ENCODE measurements at regions of chr16 and their contacts with region 1.

Region 1: GRCh38 chr16:17134586-17134985 is 336.2 kb downstream of the XYLT1 start:
- DNase-seq: no peak
- ATAC-seq: no peak
- H3K4me3 ChIP-seq: no peak overlapping the region
- H3K27ac ChIP-seq: no peak overlapping the region
- H3K4me1 ChIP-seq: no peaks in the 10 kb centered on the region
- H3K27me3 ChIP-seq: no peaks in the 10 kb centered on the region
- CTCF ChIP-seq: no peak

Region 2: GRCh38 chr16:16945207-16945606 is 189.4 kb before region 1 on chr16:
- intact Hi-C with region 1: no loop called
- DNase-seq: no peak
- ATAC-seq: no peak
- H3K4me3 ChIP-seq: no peak overlapping the region
- H3K27ac ChIP-seq: no peak overlapping the region
- H3K4me1 ChIP-seq: no peaks in the 10 kb centered on the region
- H3K27me3 ChIP-seq: peaks cover 0 to 20% (median 0%) of the 10 kb centered on the region in 7 donors
- CTCF ChIP-seq: no peak

Region 3: GRCh38 chr16:17117906-17118562 is 16.6 kb before region 1 on chr16:
- intact Hi-C with region 1: loop called in 1 of 10 experiments (anchors 1 kb)
- DNase-seq: no peak
- ATAC-seq: no peak
- H3K4me3 ChIP-seq: no peak overlapping the region
- H3K27ac ChIP-seq: no peak overlapping the region
- H3K4me1 ChIP-seq: no peaks in the 10 kb centered on the region
- H3K27me3 ChIP-seq: no peaks in the 10 kb centered on the region
- CTCF ChIP-seq: no peak

Region 4: GRCh38 chr16:17155936-17156335 is 21.4 kb after region 1 on chr16:
- intact Hi-C with region 1: loop called in 1 of 10 experiments (anchors 2 kb)
- DNase-seq: no peak
- ATAC-seq: no peak
- H3K4me3 ChIP-seq: no peak overlapping the region
- H3K27ac ChIP-seq: no peak overlapping the region
- H3K4me1 ChIP-seq: peaks cover 0 to 16% (median 0%) of the 10 kb centered on the region in 9 donors
- H3K27me3 ChIP-seq: peaks cover 0 to 10% (median 0%) of the 10 kb centered on the region in 7 donors
- CTCF ChIP-seq: no peak

Region 5: DNA sequence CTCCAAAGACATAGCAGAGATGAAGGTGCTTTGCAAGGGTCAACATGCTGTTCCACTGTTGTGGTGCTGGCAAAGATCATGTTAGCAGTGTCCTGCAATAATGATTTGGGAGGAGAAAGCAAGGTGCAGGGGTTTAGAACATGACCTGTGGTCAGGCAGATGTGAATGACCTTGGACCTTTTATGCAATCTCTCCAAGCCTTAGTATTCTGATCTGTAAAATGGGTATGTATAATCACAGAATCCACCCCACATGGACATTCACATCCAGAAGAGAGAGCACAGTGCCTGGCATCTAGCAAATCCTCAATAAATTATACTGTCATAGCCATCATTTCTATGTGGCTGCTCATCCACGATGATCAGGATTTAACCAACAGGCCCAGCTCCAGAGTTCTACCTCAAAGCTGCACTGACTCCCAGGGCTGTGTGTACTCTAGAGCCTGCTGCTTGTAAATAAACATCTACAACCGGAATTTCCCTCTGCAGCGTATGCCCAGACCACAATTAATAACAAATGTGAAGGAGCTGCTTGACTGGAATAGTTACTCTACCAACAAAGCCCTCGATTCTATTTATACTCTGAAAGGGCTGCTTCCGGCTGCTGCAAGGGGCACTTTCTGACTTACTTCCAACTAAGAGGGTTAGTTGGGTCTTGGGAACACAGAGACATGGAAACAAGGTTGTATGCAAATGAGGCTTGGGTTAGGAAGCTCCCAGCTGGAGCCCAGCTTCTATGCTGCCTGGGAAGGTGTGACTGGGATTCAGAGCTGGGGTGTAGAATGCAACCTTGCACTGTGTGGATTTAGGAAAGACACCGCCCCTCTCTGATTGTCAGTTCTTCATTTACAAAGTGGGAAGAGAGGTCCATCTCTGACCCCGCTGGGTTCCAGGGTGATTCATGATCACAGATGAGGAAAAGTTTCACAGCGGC is 71.0 kb after region 1 on chr16:
- intact Hi-C with region 1: no loop called
- DNase-seq: no peak
- ATAC-seq: no peak
- H3K4me3 ChIP-seq: no peak overlapping the region
- H3K27ac ChIP-seq: no peak overlapping the region
- H3K4me1 ChIP-seq: peaks cover 0 to 21% (median 0%) of the 10 kb centered on the region in 9 donors
- H3K27me3 ChIP-seq: peaks cover 0 to 15% (median 3%) of the 10 kb centered on the region in 7 donors
- CTCF ChIP-seq: no peak